ENCODE measurements at regions of chr17 and their contacts with region 1.

Region 1: DNA sequence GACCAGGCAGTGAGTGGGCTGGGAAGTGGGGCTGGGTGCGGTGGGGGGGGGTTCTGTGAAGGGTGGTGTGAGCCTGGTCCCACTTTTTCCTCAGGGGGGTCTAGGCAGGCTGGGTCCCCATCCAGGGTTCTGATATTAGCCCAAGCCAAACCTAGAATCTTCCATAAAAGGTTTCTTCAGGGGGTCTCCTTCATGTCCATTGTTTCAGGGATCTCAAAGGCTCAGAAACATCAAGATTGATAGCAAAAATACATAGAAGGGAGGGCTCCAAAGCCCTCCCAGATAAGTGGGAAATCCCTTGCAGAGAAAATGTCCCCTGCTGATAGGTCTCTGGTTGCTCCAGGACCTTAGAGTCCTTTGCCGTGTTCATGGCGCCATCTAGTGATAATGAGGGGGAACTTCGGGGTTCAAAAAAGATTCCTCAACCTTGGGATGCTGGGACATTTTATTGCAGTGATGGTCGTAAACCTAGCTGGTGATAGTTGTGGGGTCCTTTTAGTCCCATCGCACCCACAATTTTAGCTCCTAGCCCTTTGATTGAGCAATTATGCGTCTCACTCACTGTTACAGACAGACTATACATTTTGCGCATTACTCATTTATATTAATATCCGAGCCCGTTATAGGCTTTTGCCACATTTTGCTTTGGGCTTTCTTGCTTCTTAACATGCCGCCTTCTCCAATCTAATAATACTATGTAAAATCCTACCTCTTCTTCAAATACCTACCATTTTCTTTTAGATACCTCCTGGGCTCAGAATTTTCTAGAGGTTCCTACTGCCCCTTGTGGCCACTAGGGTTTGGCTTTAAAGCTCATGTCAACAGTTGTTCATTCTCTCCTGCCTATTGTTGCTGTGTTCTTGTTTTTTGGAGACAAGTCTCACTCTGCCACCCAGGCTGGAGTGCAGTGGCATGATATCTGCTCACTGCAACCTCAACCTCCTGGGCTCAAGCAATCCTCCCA is 35.1 kb downstream of the IGF2BP1 start:
- DNase-seq: peak; percentile 53 to 76 (median 65)
- H3K4me3 ChIP-seq: no peak overlapping the region
- H3K27ac ChIP-seq: no peak overlapping the region
- H3K4me1 ChIP-seq: no peaks in the 10 kb centered on the region
- H3K27me3 ChIP-seq: peaks cover 6% of the 10 kb centered on the region
- CTCF ChIP-seq: peak; percentile 39 to 84 (median 78)
- POLR2A ChIP-seq: no peak

Region 2: DNA sequence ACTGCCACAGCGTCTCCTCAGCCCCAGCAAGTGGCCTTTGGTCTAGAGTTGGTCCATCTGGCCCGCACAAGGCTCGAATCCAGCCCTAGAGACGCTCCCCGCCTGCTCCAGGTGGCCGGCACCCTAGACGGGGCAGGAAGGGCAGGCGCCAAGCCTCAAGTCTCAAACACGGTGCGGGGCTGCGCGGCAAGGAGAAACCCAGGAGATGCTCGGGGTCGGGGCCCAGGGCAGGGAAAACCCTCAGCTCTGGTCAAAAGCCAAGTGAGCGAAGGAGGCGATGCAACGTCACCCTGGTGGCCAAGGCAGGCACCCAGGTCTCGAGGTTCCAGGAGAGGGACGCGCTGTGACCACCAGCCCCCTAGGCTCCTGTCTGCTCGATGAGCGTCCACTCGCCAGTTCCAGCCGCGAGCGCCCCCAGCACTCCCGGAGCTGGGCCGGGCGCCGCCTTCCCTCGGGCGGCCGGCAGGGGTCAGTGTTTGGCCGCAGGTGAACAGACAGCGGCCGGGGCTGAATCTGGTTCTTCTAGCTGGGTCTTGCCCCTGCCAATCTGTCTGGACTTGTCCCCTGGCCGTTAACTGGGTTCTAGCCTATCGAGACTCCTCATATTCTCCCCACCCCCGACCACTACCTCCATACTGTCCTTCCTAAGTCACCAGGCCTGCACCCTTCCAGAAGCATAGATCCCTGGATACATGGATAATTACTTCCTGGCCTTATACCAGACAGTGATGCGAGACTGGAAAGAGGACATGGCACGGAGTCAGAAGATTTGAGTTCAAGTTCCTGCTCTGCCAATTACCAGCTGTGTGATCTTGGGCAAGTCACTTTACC is 353.9 kb before region 1 on chr17:
- intact Hi-C with region 1: loop called (anchors 10 kb)
- DNase-seq: peak; percentile 49 to 74 (median 69)
- H3K4me3 ChIP-seq: no peak overlapping the region
- H3K27ac ChIP-seq: no peak overlapping the region
- H3K4me1 ChIP-seq: peaks cover 0 to 5% of the 10 kb centered on the region in 2 donors
- H3K27me3 ChIP-seq: peaks cover 19% of the 10 kb centered on the region
- CTCF ChIP-seq: peak; percentile 71 to 96 (median 84)
- POLR2A ChIP-seq: no peak

Region 3: GRCh38 chr17:48804925-48805411 is 227.3 kb before region 1 on chr17:
- intact Hi-C with region 1: loop called (anchors 5 to 10 kb)
- DNase-seq: peak; percentile 33 to 81 (median 63)
- H3K4me3 ChIP-seq: no peak overlapping the region
- H3K27ac ChIP-seq: no peak overlapping the region
- H3K4me1 ChIP-seq: peaks cover 0 to 9% of the 10 kb centered on the region in 2 donors
- H3K27me3 ChIP-seq: peaks cover 4% of the 10 kb centered on the region
- CTCF ChIP-seq: peak; percentile 77 to 90 (median 88)
- POLR2A ChIP-seq: no peak

Region 4: GRCh38 chr17:48816774-48817590 is 215.3 kb before region 1 on chr17 and contains the start of gene TTLL6:
- intact Hi-C with region 1: loop called in 1 of 2 experiments (anchors 5 kb)
- DNase-seq: peak; percentile 86 to 94 (median 88)
- H3K4me3 ChIP-seq: peak within 1 kb of the TSS in 2 of 4 donors; percentile 10 to 43
- H3K27ac ChIP-seq: peak within 1 kb of the TSS in 1 of 5 donors; percentile 30
- H3K4me1 ChIP-seq: peaks cover 6 to 14% of the 10 kb centered on the region in 2 donors
- H3K27me3 ChIP-seq: no peaks in the 10 kb centered on the region
- CTCF ChIP-seq: no peak
- POLR2A ChIP-seq: no peak
- total RNA-seq, gene TTLL6: under 0.01 to 0.55 (median 0.40) TPM in 5 of 9 donors, not detected in the others

Region 5: DNA sequence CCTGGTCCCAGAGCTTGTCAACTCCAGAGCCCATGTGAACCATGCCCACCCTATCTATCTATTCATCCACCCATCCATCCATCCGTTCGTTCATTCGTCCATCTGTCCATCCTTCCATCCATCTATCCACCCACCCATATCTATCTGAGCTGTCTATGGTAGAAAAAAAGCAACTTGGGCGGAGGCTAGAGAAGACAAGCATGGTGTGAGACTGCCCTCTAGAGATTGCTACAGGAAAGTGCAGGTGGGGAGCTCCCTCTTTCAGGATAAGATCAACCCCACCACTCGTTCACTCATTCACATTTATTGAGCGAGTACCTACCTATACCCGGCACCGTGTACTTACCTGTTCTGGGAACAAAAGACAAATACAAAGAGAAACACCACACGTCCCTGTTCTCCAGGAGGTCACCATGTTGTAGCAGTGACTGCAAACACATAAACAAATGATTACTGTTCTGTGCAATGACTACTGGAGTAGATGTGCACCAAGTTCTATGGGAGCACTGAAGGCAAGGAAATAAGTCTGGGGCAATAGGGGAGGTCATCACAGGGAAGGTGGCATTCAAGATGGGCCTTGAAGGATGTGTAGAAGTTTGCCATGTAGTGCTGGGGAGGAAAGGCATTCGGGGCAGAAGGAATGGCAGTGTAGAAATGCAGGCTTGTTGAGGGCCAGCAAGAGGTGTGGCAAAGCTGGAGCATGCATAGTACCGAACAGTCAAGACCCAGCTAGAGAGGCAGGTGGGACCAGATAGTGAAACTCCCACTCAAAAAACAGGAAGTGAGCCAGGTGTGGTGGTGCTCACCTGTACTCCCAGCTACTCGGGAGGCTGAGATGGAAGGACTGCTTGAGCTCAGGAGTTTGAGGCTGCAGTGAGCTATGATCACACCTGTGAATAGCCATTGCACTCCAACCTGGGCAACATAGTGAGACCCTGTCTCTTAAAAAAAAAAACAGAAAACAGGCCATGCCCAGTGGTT is 153.0 kb before region 1 on chr17:
- intact Hi-C with region 1: loop called in 1 of 2 experiments (anchors 10 kb)
- DNase-seq: peak; percentile 44 to 80 (median 57)
- H3K4me3 ChIP-seq: no peak overlapping the region
- H3K27ac ChIP-seq: no peak overlapping the region
- H3K4me1 ChIP-seq: no peaks in the 10 kb centered on the region
- H3K27me3 ChIP-seq: no peaks in the 10 kb centered on the region
- CTCF ChIP-seq: peak; percentile 88 to 97 (median 92)
- POLR2A ChIP-seq: no peak

Region 6: GRCh38 chr17:48892940-48893645 is 139.2 kb before region 1 on chr17:
- intact Hi-C with region 1: loop called (anchors 5 to 10 kb)
- DNase-seq: no peak
- H3K4me3 ChIP-seq: peak overlapping the region; percentile 52 to 87 (median 60)
- H3K27ac ChIP-seq: peak overlapping the region in 3 of 5 donors; percentile 80 to 90 (median 80)
- H3K4me1 ChIP-seq: peaks cover 10 to 21% of the 10 kb centered on the region in 2 donors
- H3K27me3 ChIP-seq: no peaks in the 10 kb centered on the region
- CTCF ChIP-seq: no peak
- POLR2A ChIP-seq: no peak

Region 7: DNA sequence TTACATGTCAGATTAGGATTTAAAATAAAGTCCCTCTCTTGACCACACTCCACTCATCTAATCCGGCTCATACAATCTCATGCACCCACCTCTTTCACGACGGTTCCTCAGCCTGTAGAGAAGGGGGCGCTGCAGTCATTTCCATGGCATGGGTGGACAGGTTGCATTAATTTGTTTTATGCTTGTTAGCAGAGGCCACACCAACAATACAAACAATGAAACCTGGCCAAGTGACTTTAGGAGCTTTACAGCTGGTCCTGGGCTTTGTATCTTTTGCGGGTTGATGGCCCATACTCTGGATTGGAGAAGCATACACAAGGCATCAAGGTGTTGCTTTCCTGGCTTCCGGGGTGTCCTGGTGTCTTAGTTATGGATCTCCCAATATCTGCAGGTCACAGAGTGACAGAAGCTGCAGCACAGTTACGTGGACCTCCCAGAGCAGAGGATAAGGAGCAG is 77.9 kb before region 1 on chr17:
- intact Hi-C with region 1: no loop called
- DNase-seq: no peak
- H3K4me3 ChIP-seq: no peak overlapping the region
- H3K27ac ChIP-seq: no peak overlapping the region
- H3K4me1 ChIP-seq: no peaks in the 10 kb centered on the region
- H3K27me3 ChIP-seq: peaks cover 4% of the 10 kb centered on the region
- CTCF ChIP-seq: no peak
- POLR2A ChIP-seq: no peak